OCI-LY7 (cell line): ENCODE measurements at regions of chr1 and their contacts with region 1.

Region 1: GRCh38 chr1:156608036-156608674 is 6.9 kb upstream of the GPATCH4 start:
- DNase-seq: peak; percentile 87
- H3K4me3 ChIP-seq: no peak overlapping the region
- H3K27ac ChIP-seq: no peak overlapping the region
- H3K4me1 ChIP-seq: peaks cover 25% of the 10 kb centered on the region
- CTCF ChIP-seq: peak; percentile 91

Region 2: DNA sequence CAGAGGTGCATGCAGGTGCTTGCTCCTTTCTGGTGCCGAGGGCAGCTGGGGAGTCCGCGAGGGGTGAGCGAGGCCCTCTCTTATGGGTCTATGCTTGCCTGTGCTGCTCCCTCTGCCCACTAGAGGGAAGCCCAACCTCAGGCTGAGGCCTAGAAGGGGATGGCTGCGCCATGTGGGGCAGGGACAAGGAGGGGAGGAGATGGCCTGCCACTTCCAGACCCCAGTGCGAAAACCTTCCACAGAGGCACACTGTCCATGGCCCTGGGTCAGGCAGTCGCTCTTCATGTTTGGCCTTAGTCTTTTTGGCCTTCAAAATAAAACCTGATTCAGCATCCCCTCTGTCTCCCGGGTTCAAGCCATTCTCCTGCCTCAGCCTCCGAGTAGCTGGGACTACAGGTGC is 225.1 kb before region 1 on chr1:
- CTCF ChIA-PET with region 1: no interaction called
- POLR2A ChIA-PET with region 1: no interaction called
- intact Hi-C with region 1: loop called (anchors 1 kb)
- DNase-seq: peak; percentile 71
- H3K4me3 ChIP-seq: no peak overlapping the region
- H3K27ac ChIP-seq: no peak overlapping the region
- H3K4me1 ChIP-seq: peaks cover 3% of the 10 kb centered on the region
- CTCF ChIP-seq: peak; percentile 86

Region 3: GRCh38 chr1:156445789-156446263 is 162.3 kb before region 1 on chr1:
- CTCF ChIA-PET with region 1: no interaction called
- POLR2A ChIA-PET with region 1: interaction called, 3 read pairs
- intact Hi-C with region 1: loop called (anchors 2 kb)
- DNase-seq: peak; percentile 74
- H3K4me3 ChIP-seq: no peak overlapping the region
- H3K27ac ChIP-seq: no peak overlapping the region
- H3K4me1 ChIP-seq: peaks cover 6% of the 10 kb centered on the region
- CTCF ChIP-seq: peak; percentile 98

Region 4: DNA sequence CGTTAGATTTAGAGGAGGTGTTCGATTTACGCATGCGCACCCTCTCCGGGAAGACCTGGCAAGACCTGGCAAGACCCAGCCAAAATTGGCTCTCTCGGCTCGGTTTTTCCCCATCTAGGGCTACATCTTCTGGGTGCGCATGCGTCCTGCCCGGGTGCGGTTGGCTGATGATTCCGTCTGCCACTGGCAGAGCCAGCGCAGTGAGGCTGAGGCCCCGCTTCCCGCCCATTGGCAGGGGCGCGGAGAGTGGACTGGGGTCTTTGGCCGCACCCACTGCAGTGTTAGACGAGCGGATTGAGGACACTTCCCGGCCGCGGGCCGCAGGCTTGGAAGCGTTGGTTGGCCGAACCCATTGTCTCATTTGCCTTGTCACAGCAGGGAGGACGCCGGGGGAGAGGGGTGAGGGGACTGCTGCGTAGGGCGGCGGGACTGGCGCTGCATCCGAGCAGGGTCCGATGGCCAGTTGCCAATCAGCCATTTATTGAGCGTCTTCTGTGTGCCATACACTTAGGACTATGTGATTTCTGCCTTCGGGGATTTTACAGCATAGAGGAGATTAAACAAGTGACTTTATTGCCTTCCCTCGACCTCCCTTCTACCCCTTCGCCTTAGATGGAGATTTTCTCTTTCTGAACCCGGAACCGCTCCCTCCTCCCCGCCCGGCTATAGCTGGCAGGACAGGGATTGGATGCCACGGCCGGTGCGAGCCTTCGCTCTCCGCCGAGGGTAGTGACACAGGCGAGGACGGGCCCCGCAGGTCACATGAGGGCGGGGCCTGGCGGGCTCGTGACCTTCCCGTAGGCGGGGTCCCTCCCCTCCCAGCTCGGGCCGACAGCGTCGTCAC is 151.3 kb before region 1 on chr1:
- CTCF ChIA-PET with region 1: no interaction called
- POLR2A ChIA-PET with region 1: interaction called, 7 read pairs
- intact Hi-C with region 1: loop called (anchors 1 kb)
- DNase-seq: peak; percentile 97
- H3K4me3 ChIP-seq: peak overlapping the region; percentile 66
- H3K27ac ChIP-seq: peak overlapping the region; percentile 82
- H3K4me1 ChIP-seq: peaks cover 20% of the 10 kb centered on the region
- CTCF ChIP-seq: 0 out of 2 replicates have a peak, but pooled peaks have one; percentile 6

Region 5: DNA sequence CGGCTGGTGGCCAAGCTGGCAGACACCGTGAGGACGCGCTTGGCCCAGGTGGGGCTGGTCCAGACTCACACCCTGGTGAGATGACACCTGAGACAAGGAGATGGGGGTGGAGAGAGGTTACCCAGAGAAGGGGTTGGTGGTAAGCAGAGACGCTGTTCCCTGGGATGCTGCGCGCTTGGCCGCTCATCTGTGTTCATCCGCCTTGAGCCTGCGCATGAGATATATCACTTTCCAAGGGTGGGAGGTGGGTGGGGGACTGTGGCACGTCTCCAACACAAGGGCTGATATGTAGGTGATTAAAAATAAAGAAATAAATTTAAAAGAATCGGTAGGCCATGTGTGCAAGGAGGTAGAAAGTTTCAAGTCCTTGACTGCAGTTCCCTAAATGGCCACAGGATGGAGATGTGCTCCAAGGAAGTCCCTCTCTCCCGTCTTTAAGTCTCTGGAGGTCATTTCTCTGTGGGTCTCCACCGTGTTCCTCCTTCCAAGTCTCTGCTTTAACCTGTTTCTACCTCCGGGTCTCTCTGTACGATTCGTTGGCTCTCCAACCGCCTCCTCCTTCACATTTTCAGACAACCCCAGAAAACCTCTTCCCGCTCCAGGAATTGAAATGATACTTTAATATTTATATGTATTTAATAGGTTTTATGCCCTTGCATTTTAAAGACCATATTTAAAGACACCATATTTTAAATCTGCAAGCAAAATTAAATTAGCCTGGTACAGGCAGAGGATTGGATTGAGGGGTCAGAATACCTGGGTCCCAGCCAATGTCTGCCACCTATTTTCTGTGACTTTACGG is 24.1 kb before region 1 on chr1:
- CTCF ChIA-PET with region 1: no interaction called
- POLR2A ChIA-PET with region 1: interaction called, 3 read pairs
- intact Hi-C with region 1: loop called (anchors 1 kb)
- DNase-seq: peak; percentile 90
- H3K4me3 ChIP-seq: peak overlapping the region; percentile 62
- H3K27ac ChIP-seq: peak overlapping the region; percentile 40
- H3K4me1 ChIP-seq: peaks cover 39% of the 10 kb centered on the region
- CTCF ChIP-seq: peak; percentile 88

Region 6: DNA sequence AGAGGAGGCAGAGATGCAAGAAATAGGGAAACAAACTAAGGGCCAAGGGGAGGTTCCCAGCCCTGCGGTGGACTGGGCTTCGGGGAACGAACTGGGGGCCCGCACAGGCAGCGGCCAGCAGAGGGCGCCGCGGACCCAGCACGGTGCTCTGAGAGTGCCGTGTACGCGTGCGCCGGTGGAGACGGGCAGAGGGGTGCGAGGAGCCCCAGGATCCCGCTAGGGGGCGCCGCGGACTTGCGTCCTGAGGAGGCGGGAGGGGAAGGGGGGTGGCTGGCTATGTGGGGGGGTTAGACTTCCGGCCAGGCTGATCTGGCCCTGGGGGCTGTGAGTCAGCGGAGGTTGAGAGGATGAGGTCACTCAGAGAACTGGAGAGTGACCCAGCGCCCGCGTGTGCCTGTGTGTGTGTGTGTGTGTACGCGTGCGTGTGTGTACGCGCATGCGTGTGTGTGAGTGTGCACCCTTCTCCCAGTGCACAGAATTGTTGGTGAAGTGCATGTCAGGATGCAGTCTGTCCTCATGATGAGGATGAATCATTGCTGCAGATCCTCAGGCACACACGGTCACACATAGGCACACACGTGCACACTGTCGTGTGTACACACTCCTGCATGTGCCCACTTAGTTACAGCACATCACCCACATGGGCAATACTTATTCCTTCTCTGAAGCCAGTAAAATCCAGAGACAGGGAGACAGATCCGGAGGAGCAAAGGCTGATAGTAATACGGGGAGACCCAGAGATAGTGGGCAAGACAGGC is 52.0 kb after region 1 on chr1:
- CTCF ChIA-PET with region 1: no interaction called
- POLR2A ChIA-PET with region 1: no interaction called
- intact Hi-C with region 1: no loop called
- DNase-seq: peak; percentile 96
- H3K4me3 ChIP-seq: no peak overlapping the region
- H3K27ac ChIP-seq: no peak overlapping the region
- H3K4me1 ChIP-seq: peaks cover 62% of the 10 kb centered on the region
- CTCF ChIP-seq: peak; percentile 99